ENCODE measurements at regions of chr4 and their contacts with region 1.

Region 1: GRCh38 chr4:8917868-8918783 is 46.5 kb upstream of the HMX1 start:
- DNase-seq: peak; percentile 91
- ATAC-seq: peak; percentile 92
- H3K4me3 Mint-ChIP-seq: no peak overlapping the region
- H3K27ac Mint-ChIP-seq: no peak overlapping the region
- H3K4me1 Mint-ChIP-seq: no peaks in the 10 kb centered on the region
- H3K27me3 Mint-ChIP-seq: peaks cover 13% of the 10 kb centered on the region
- CTCF ChIP-seq: peak; percentile 90

Region 2: GRCh38 chr4:8117278-8117682 is 800.8 kb before region 1 on chr4:
- CTCF ChIA-PET with region 1: no interaction called
- POLR2A ChIA-PET with region 1: no interaction called
- DNase-seq: peak; percentile 85
- ATAC-seq: peak; percentile 97
- H3K4me3 Mint-ChIP-seq: no peak overlapping the region
- H3K27ac Mint-ChIP-seq: peak overlapping the region; percentile 51; the same call in 1 of the 2 replicates
- H3K4me1 Mint-ChIP-seq: peaks cover 12% of the 10 kb centered on the region
- H3K27me3 Mint-ChIP-seq: peaks cover 3% of the 10 kb centered on the region; the same call in 1 of the 2 replicates
- CTCF ChIP-seq: no peak

Region 3: DNA sequence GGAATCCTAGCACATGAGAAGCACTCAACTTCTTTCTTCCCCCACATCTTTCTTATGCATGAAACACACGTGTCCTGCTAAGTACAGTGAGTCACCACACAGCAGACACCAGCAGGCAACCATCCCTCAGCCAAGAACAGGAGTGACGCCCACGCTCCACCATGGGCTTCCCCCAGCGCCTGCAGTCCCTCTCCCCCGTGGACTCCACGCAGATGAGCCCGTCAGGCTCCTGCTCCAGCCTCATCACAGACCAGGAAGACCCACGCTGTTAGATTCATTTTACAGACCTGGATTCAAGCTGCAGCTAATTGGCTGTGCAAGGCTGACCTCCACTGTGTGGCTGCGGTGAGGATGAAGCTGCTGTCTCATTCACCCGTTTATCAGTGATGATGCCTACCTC is 63.2 kb before region 1 on chr4:
- CTCF ChIA-PET with region 1: interaction called, 15 read pairs
- POLR2A ChIA-PET with region 1: no interaction called
- DNase-seq: no peak
- ATAC-seq: no peak
- H3K4me3 Mint-ChIP-seq: no peak overlapping the region
- H3K27ac Mint-ChIP-seq: no peak overlapping the region
- H3K4me1 Mint-ChIP-seq: peaks cover 30% of the 10 kb centered on the region
- H3K27me3 Mint-ChIP-seq: peaks cover 82% of the 10 kb centered on the region
- CTCF ChIP-seq: no peak

Region 4: DNA sequence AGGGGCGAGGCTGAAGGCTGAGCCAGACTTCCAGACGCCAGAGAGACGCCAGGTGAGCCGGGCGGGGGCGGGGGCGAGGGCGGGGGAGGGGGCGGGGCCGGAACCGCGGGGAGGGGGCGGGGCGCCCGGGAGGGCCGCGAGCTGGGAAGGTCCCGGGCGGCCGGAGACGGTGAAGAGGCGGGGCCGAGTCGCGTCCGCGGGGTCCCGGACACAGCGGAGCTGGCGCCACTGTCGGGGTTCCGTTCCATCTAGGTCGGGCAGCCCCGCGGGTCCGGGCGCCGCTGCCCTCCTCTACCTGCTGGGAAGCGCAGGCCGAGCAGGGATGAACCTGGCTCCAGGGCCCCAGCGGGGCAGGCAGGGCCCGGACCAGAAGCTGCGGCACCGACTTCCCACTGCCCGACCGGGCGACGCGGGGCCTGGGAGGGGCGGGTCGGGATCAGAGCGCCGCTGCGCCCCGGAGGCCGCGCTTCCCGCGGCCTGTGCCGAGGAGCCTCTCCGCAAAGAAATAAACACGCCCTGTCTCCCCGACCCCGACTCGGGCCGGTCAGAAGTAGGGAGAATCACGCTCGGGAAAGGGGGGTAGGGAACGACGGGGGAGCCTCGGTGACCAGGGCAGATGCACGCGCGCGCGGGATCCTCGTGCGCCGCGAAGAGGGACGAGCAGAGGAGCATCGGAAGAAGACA is 57.1 kb before region 1 on chr4:
- CTCF ChIA-PET with region 1: interaction called, 15 read pairs
- POLR2A ChIA-PET with region 1: no interaction called
- DNase-seq: peak; percentile 71
- ATAC-seq: peak; percentile 29
- H3K4me3 Mint-ChIP-seq: peak overlapping the region; percentile 73
- H3K27ac Mint-ChIP-seq: no peak overlapping the region
- H3K4me1 Mint-ChIP-seq: peaks cover 19% of the 10 kb centered on the region
- H3K27me3 Mint-ChIP-seq: peaks cover 99% of the 10 kb centered on the region
- CTCF ChIP-seq: no peak

Region 5: DNA sequence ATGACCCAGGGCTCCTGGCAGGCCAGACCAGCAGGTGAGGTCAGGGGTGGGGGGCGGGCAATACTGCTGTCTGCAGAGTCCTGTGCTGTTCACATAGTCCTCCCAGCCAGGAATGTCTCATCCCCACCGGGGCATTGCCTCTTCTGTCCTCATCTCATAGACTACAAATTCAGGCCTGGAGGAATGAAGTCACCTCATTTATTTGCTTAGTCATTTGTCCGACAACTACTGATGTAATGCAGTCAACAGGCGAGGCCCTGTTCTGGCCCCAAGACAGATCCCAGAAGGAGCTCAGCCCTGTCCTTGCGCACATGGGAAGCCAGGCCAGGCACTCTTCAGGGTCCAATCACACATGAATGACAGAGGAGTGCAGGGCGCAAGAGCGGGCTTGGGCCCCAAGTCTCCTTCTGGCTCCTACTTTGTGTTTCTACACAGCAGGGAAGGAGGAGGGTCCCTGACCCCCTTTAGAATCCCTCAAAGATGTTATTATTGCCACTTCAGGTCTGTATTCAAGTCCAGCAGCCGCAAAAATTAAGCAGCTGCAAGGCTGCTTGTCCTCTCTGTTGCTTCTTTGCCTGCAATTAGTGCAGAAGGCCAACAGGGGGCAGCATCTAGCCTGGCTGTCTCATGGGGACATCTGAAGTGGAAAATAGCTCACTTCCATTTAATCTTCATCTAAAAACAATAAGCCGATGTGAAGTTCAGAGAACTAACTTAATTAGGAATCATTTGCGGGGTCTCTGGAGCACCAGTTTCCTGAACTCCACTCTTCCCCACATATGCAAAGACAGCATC is 31.3 kb before region 1 on chr4:
- CTCF ChIA-PET with region 1: interaction called, 10 read pairs
- POLR2A ChIA-PET with region 1: no interaction called
- DNase-seq: no peak
- ATAC-seq: no peak
- H3K4me3 Mint-ChIP-seq: no peak overlapping the region
- H3K27ac Mint-ChIP-seq: no peak overlapping the region
- H3K4me1 Mint-ChIP-seq: peaks cover 19% of the 10 kb centered on the region
- H3K27me3 Mint-ChIP-seq: peaks cover 97% of the 10 kb centered on the region
- CTCF ChIP-seq: peak; percentile 60

Region 6: DNA sequence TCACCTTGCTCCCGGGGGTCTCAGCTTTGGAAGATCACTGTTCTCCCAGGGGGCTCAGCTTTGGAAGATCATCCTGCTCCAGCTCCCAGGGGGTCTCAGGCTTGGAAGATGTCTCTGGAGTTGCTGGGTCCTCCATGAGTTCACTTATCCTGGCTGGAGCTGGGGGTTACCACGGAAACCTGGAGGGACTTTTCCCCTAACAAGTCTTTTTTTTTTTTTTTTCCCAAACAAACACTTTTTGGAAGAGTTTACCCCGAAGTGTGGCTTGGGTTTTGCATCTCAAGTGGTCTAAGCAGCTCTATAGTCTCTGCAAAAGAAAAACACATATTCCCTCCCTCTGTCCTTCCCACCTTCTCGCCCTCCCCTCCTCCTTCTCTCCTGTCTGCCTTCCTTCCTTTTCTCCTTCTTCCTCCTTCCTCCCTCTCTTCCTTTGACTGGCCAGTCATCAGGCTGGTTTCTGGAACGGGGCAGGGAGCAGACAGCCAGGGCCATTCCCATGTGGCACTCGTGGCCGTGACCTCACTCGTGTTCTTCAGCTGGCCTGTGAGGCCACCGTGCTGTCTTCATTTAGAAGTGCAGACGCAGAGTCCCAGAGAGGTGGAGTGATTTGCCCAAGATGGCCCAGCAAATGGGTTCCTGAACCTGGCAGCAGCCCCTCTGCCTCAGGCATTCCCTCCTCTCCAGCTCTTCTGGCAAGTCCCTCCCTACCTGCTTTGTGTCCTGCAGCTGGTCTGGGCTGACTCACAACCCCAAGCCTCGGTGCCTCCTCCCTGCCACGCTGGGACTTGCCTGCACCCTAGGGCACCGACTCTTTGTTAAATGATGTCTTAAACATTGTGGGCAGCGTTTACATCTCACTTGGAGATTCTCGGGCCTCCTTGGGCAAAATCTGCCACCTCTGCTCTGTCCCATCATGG is 20.6 kb before region 1 on chr4:
- CTCF ChIA-PET with region 1: interaction called, 12 read pairs
- POLR2A ChIA-PET with region 1: no interaction called
- DNase-seq: no peak
- ATAC-seq: no peak
- H3K4me3 Mint-ChIP-seq: no peak overlapping the region
- H3K27ac Mint-ChIP-seq: no peak overlapping the region
- H3K4me1 Mint-ChIP-seq: peaks cover 27% of the 10 kb centered on the region
- H3K27me3 Mint-ChIP-seq: peaks cover 72% of the 10 kb centered on the region
- CTCF ChIP-seq: no peak

Region 7: GRCh38 chr4:8932884-8933283 is 14.8 kb after region 1 on chr4:
- CTCF ChIA-PET with region 1: no interaction called
- POLR2A ChIA-PET with region 1: no interaction called
- DNase-seq: no peak
- ATAC-seq: no peak
- H3K4me3 Mint-ChIP-seq: no peak overlapping the region
- H3K27ac Mint-ChIP-seq: no peak overlapping the region
- H3K4me1 Mint-ChIP-seq: no peaks in the 10 kb centered on the region
- H3K27me3 Mint-ChIP-seq: peaks cover 25% of the 10 kb centered on the region
- CTCF ChIP-seq: no peak

Measured in WTC11 (cell line).